ENCODE measurements at regions of chrX and their contacts with region 1.

Region 1: DNA sequence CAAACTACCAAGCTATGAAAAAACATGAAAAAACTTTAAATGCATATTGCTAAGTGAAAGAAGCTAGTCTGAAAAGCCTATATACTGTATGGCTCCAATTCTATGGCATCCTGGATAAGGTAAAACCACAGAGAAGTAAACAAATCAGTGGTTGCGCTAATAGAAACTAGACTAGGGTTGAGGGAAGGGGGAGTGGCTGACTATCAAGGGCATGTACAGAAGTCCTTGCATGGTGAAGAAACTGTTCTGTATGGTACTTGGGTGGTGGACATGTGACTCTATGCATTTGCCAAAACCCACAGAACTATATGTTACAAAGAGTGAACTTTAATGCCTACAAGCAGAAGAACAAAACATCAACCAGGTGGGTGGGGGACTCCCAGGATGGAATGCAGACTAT is 96.8 kb downstream of the MTMR1 start:
- DNase-seq: no peak
- ATAC-seq: peak; percentile 36
- H3K4me3 Mint-ChIP-seq: no peak overlapping the region
- H3K27ac Mint-ChIP-seq: no peak overlapping the region
- H3K4me1 Mint-ChIP-seq: peaks cover 4% of the 10 kb centered on the region
- H3K27me3 Mint-ChIP-seq: no peaks in the 10 kb centered on the region

Region 2: GRCh38 chrX:150854856-150855255 is 64.8 kb after region 1 on chrX:
- CTCF ChIA-PET with region 1: no interaction called
- POLR2A ChIA-PET with region 1: no interaction called
- intact Hi-C with region 1: loop called in 1 of 2 experiments (anchors 10 kb)
- DNase-seq: no peak
- ATAC-seq: no peak
- H3K4me3 Mint-ChIP-seq: no peak overlapping the region
- H3K27ac Mint-ChIP-seq: no peak overlapping the region
- H3K4me1 Mint-ChIP-seq: no peaks in the 10 kb centered on the region
- H3K27me3 Mint-ChIP-seq: no peaks in the 10 kb centered on the region

Region 3: GRCh38 chrX:150902434-150903109 is 112.6 kb after region 1 on chrX:
- CTCF ChIA-PET with region 1: no interaction called
- POLR2A ChIA-PET with region 1: no interaction called
- intact Hi-C with region 1: no loop called
- DNase-seq: no peak
- ATAC-seq: no peak
- H3K4me3 Mint-ChIP-seq: no peak overlapping the region
- H3K27ac Mint-ChIP-seq: no peak overlapping the region
- H3K4me1 Mint-ChIP-seq: peaks cover 1% of the 10 kb centered on the region
- H3K27me3 Mint-ChIP-seq: no peaks in the 10 kb centered on the region

Region 4: DNA sequence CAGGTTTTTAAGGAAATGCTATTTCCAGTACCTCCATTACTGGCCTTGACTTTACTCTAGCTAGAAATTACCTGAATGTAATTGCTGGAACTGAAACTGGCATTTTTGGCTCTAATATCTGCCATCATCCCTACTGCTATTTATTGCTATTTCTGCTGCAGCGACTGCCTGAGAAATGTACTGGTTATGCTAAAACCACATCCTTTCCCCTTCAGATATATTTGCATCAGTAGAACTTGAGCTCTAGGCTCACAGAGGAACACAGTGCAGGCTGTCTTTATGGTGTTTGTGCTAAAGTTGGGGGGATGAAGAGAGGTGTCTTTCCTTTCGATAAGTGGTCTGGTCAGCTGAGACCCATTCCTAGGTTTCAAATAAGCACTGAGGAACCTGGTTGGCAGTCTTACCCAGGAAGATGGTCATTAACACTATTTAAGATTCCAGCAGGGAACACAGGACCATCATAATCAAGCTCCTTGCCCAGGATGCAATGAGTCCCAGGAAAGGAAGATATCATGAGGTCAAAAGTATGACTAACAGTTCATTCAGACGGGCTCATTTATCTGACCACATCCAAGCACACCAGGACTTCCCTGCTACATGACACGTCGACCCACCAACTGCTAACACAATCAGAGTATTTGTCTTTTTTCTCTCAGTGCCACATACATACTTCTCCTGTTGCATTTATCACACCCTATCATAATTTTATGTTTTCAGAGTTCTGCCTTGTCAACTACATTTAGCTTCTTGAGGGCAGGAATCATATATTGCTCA is 1523.7 kb after region 1 on chrX:
- CTCF ChIA-PET with region 1: no interaction called
- POLR2A ChIA-PET with region 1: no interaction called
- intact Hi-C with region 1: no loop called
- DNase-seq: no peak
- ATAC-seq: no peak
- H3K4me3 Mint-ChIP-seq: no peak overlapping the region
- H3K27ac Mint-ChIP-seq: no peak overlapping the region
- H3K4me1 Mint-ChIP-seq: no peaks in the 10 kb centered on the region
- H3K27me3 Mint-ChIP-seq: no peaks in the 10 kb centered on the region